Common myeloid progenitor, CD34-positive (primary cell): ENCODE measurements at regions of chr6 and their contacts with region 1.

Region 1: GRCh38 chr6:109362102-109362884 is 20.0 kb downstream of the CD164 start:
- DNase-seq: no peak
- H3K4me3 ChIP-seq: no peak overlapping the region
- H3K27ac ChIP-seq: no peak overlapping the region
- H3K4me1 ChIP-seq: peaks cover 0 to 1% (median 0%) of the 10 kb centered on the region in 4 experiments
- H3K27me3 ChIP-seq: no peaks in the 10 kb centered on the region

Region 2: DNA sequence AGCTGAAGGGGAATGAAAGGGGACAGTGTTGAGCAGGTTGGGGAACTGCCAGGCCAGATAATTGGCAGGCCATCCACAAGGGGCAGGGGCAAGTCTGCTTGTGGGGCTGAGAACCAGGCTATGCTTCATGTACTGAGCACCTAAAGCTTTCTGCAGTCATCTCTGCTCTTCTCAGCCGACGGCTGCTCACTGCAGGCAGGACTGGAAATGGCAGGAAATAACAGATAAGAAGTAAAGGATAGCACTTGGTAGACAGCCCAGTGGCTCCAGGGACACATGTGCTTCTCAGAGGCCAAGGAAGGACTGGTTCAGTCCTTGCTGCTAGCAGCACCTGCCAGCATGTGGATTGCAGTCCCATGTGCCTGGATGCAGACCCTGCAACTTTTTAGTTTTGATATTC is 69.9 kb before region 1 on chr6:
- CTCF ChIA-PET with region 1: no interaction called
- POLR2A ChIA-PET with region 1: no interaction called
- DNase-seq: no peak
- H3K4me3 ChIP-seq: no peak overlapping the region
- H3K27ac ChIP-seq: no peak overlapping the region
- H3K4me1 ChIP-seq: peaks cover 7 to 52% (median 39%) of the 10 kb centered on the region in 4 experiments
- H3K27me3 ChIP-seq: no peaks in the 10 kb centered on the region

Region 3: GRCh38 chr6:109349419-109350078 is 12.7 kb before region 1 on chr6:
- CTCF ChIA-PET with region 1: interaction called, 19 read pairs
- POLR2A ChIA-PET with region 1: interaction called, 3 read pairs
- DNase-seq: peak; percentile 81 to 95 (median 94)
- H3K4me3 ChIP-seq: peak overlapping the region in 2 of 7 experiments; percentile 10 to 33
- H3K27ac ChIP-seq: peak overlapping the region; percentile 22 to 69
- H3K4me1 ChIP-seq: peaks cover 16 to 68% (median 41%) of the 10 kb centered on the region in 4 experiments
- H3K27me3 ChIP-seq: no peaks in the 10 kb centered on the region

Region 4: GRCh38 chr6:109373762-109374161 is 11.5 kb after region 1 on chr6:
- CTCF ChIA-PET with region 1: interaction called, 13 read pairs
- POLR2A ChIA-PET with region 1: interaction called, 3 read pairs
- DNase-seq: peak in 2 of 3 donors; percentile 45 to 50
- H3K4me3 ChIP-seq: peak overlapping the region in 3 of 7 experiments; percentile 38 to 96 (median 58)
- H3K27ac ChIP-seq: peak overlapping the region in 1 of 2 experiments; percentile 46
- H3K4me1 ChIP-seq: peaks cover 42 to 85% (median 56%) of the 10 kb centered on the region in 4 experiments
- H3K27me3 ChIP-seq: no peaks in the 10 kb centered on the region

Region 5: DNA sequence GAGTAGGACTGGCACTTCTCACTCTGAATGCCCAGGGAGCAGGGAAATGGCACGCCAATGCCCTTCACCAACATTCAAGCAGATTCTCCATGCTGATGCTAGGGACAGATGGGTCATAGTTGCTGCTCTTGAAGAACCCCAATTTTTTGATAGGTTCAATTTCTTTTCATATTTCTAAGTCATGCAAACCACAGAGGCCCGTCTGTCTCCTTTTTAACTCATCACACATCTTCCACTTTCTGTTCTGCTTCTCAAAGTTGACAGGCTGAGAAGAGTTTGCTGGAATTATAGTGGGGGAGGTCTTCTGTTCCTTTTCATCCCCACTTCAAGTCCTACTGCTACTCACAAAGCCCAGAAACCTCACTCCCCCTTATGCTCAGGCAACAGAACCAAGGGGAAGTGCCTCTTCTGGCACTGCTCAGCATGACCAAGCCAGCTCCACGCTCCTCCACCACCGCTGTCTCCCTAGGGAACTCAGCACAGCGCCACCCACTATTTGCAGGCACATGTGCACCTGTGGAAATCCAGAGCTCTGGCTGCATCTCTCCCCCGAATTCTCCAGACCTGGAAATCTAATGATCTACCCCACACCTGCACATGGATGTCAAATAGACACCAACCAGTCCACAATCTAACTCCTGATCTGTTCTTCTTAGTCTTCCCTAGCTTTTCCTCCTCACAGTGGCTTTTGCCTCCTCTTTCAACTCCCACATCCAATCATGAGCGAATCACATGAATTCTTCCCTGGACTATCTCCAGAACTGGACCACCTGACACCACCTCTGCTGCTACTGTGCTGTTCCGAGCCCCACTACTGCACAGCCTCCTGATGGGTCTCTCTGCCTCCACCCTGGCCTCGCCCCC is 110.1 kb after region 1 on chr6:
- CTCF ChIA-PET with region 1: no interaction called
- POLR2A ChIA-PET with region 1: no interaction called
- DNase-seq: no peak
- H3K4me3 ChIP-seq: no peak overlapping the region
- H3K27ac ChIP-seq: no peak overlapping the region
- H3K4me1 ChIP-seq: no peaks in the 10 kb centered on the region
- H3K27me3 ChIP-seq: no peaks in the 10 kb centered on the region